ENCODE measurements at regions of chr7 and their contacts with region 1.

Region 1: GRCh38 chr7:30478349-30479201 is at the start of gene NOD1:
- DNase-seq: peak; percentile 67
- H3K4me3 ChIP-seq: peak within 1 kb of the TSS; percentile 69
- H3K27ac ChIP-seq: no peak within 1 kb of the TSS
- H3K4me1 ChIP-seq: peaks cover 58% of the 10 kb centered on the region
- CTCF ChIP-seq: no peak
- total RNA-seq, gene NOD1: 8.4 and 9.5 TPM in 2 replicates

Region 2: DNA sequence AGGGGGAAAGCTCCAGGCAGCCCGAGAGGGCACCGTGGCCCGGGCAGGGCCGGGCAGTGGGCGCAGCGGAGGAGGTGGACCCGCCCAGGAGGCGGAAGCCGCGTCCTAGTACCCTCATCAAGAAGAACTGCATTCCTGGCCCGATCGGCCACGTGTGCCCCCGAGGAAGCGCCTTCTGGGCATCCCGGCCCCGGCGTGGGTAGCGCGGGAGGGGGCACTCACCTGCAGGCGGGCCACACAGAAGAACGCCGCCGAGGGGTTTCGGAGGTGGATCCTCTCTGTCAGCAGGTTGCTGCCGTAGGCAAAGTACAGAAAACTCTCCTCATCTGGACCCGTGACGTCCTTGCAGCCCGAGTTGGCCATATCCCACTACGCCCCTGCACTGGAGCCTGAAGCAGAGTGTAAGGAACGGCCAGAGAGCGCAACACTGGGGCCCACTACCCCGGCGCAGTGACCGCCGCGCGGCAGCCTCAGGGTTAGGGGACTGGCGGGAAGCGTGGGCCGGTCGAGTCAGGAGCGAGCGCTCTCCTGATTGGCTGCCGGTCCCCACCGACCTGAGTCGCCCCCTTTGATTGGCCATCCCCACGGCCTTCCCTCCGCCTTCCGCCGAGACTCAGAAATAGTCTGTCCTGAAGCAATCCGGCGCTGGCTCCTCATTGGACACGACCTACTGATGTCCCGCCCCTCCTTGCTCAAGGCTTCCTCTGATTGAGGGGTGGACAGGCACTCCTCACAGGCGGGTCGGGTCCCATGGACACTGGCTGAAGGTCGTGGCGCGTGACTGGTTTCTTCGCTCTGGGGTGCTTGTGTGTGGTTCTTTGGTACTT is 26.0 kb after region 1 on chr7 and contains the start of gene GGCT:
- CTCF ChIA-PET with region 1: no interaction called
- POLR2A ChIA-PET with region 1: interaction called, 6 read pairs
- intact Hi-C with region 1: loop called (anchors 2 kb)
- DNase-seq: peak; percentile 99
- H3K4me3 ChIP-seq: peak within 1 kb of the TSS; percentile 84
- H3K27ac ChIP-seq: peak within 1 kb of the TSS; percentile 34
- H3K4me1 ChIP-seq: peaks cover 22% of the 10 kb centered on the region
- CTCF ChIP-seq: no peak
- total RNA-seq, gene GGCT: 70.3 and 81.7 TPM in 2 replicates

Measured in OCI-LY7 (cell line).